RWPE1 (cell line): ENCODE measurements at regions of chr16 and their contacts with region 1.

Region 1: GRCh38 chr16:30902029-30902972 is 5.9 kb downstream of the CTF1 start:
- DNase-seq: peak; percentile 57
- H3K27ac ChIP-seq: peak overlapping the region; percentile 84
- CTCF ChIP-seq: peak; percentile 92

Region 2: GRCh38 chr16:30874821-30875717 is 27.2 kb before region 1 on chr16:
- CTCF ChIA-PET with region 1: interaction called, 13 read pairs
- POLR2A ChIA-PET with region 1: interaction called, 6 read pairs
- DNase-seq: peak; percentile 79
- H3K27ac ChIP-seq: peak overlapping the region; percentile 88
- CTCF ChIP-seq: no peak

Region 3: GRCh38 chr16:31010585-31011325 is 108.5 kb after region 1 on chr16 and contains the start of gene STX1B:
- CTCF ChIA-PET with region 1: no interaction called
- POLR2A ChIA-PET with region 1: no interaction called
- DNase-seq: no peak
- H3K27ac ChIP-seq: no peak within 1 kb of the TSS
- CTCF ChIP-seq: no peak